Common myeloid progenitor, CD34-positive (primary cell): ENCODE measurements at regions of chr6 and their contacts with region 1.

Region 1: GRCh38 chr6:111210194-111210728 is 123.0 kb downstream of the SLC16A10 start:
- DNase-seq: peak; percentile 69 to 81 (median 75)
- H3K4me3 ChIP-seq: no peak overlapping the region
- H3K27ac ChIP-seq: no peak overlapping the region
- H3K4me1 ChIP-seq: peaks cover 0 to 12% (median 5%) of the 10 kb centered on the region in 4 experiments
- H3K27me3 ChIP-seq: no peaks in the 10 kb centered on the region

Region 2: DNA sequence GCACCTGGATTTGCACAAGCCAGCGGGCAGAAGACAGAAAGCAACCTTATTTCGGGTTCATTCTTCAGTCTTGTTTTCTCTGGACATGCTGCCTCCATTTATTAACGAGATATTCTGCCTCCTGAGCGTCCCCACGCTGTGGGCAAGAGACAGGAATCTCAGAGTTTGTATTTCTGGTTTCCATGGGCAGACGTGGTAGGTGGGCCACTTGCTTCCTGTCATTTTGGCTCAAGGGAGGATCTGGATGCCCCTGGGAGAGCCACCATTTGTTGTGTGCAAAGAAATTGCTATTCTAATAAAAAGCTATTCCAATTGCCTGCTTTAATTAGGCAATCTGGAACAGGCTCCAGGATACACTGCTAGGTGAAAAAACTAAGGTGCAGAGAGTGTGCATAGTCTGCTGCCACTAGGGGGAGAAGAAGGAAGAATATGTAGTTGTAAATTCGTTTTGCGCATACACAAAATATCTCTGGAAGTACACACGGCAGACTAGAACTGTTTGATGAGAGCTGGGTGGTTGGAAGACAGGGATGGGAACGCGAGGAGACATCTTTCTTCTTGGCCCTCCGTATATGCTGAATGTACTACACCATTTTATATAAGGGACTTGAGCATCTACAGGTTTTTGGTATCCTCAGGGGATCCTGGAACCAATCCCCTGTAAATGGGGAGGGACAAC is 153.0 kb before region 1 on chr6:
- CTCF ChIA-PET with region 1: interaction called, 22 read pairs
- POLR2A ChIA-PET with region 1: interaction called, 3 read pairs
- DNase-seq: peak; percentile 39 to 62 (median 60)
- H3K4me3 ChIP-seq: no peak overlapping the region
- H3K27ac ChIP-seq: no peak overlapping the region
- H3K4me1 ChIP-seq: no peaks in the 10 kb centered on the region
- H3K27me3 ChIP-seq: no peaks in the 10 kb centered on the region

Region 3: GRCh38 chr6:111171577-111172400 is 38.5 kb before region 1 on chr6:
- CTCF ChIA-PET with region 1: interaction called, 11 read pairs
- POLR2A ChIA-PET with region 1: interaction called, 3 read pairs
- DNase-seq: peak in 1 of 3 donors; percentile 29
- H3K4me3 ChIP-seq: no peak overlapping the region
- H3K27ac ChIP-seq: no peak overlapping the region
- H3K4me1 ChIP-seq: peaks cover 0 to 12% (median 2%) of the 10 kb centered on the region in 4 experiments
- H3K27me3 ChIP-seq: no peaks in the 10 kb centered on the region

Region 4: DNA sequence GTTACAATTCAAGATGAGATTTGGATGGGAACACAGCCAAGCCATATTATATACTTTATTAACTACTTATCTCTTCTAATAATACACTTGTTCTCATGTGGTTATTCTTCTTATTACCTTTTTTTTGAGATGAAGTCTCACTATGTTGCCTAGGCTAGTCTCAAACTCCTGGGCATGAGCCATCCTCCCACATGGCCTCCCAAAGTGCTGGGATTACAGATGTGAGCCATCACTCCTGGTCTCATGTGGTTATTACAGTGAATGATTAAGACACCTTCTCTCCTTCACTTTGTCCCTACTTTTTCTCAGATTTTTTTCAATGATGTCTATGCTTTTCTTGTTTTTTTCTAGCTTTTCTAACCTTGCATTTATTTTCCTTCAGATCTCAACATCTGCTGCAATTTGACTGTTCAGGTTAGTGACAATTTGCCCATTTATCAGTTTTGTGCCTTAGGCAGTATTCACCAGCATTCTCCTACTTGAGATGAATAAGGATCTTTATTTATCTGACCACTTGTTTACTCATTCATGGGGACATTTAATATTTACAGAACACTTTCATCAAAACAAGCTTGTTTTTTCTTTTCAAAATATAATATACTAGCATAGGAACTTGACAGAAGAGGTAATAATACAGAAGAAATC is 17.2 kb before region 1 on chr6:
- CTCF ChIA-PET with region 1: no interaction called
- POLR2A ChIA-PET with region 1: no interaction called
- DNase-seq: no peak
- H3K4me3 ChIP-seq: no peak overlapping the region
- H3K27ac ChIP-seq: no peak overlapping the region
- H3K4me1 ChIP-seq: no peaks in the 10 kb centered on the region
- H3K27me3 ChIP-seq: no peaks in the 10 kb centered on the region